ENCODE measurements at regions of chr7 and their contacts with region 1.

Region 1: DNA sequence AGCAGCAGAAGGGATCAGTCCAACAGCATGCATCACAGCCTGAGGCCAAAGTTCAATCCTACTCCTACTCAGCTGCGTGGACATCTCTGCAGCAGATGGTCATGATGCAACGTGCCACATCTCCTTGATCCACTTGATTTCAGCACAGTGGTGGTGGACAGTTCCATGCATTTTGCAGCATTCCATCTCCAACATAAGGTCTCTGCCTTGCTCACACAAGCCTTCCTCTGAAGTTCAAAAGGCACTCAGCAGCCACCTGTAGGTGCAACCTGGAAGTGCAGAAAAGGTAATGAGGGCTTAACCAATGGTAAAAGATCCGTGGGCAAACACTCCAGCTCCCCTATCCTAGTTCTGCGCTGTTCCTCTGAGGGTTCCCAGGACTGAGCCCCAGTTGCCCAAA is 57.5 kb upstream of the CHCHD3 start:
- DNase-seq: no peak
- H3K4me3 ChIP-seq: no peak overlapping the region
- H3K27ac ChIP-seq: no peak overlapping the region
- H3K4me1 ChIP-seq: no peaks in the 10 kb centered on the region
- H3K27me3 ChIP-seq: no peaks in the 10 kb centered on the region
- CTCF ChIP-seq: no peak
- POLR2A ChIP-seq: no peak

Region 2: DNA sequence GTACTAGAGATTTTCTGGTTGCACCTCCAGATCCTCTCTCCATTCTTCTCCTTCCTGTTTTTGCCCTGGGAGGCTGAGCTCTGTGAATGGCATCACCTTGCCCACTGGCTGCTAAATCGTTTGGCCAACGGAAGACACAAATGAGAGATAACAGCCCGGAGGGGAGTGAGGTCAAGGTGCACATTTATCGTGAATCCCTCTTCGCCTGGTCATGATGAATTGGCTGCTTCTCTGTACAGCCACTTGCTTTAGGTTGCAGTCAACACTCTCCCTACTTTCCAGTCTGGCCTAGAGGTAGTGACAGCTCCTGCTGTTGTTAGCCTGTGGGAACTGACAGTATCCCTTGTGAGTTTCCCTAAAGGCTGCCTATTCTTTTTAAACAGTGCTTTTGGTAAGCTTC is 27.9 kb after region 1 on chr7:
- intact Hi-C with region 1: no loop called
- DNase-seq: no peak
- H3K4me3 ChIP-seq: no peak overlapping the region
- H3K27ac ChIP-seq: no peak overlapping the region
- H3K4me1 ChIP-seq: no peaks in the 10 kb centered on the region
- H3K27me3 ChIP-seq: no peaks in the 10 kb centered on the region
- CTCF ChIP-seq: no peak
- POLR2A ChIP-seq: no peak

Region 3: GRCh38 chr7:133513598-133513997 is 374.2 kb after region 1 on chr7:
- intact Hi-C with region 1: no loop called
- DNase-seq: no peak
- H3K4me3 ChIP-seq: no peak overlapping the region
- H3K27ac ChIP-seq: no peak overlapping the region
- H3K4me1 ChIP-seq: no peaks in the 10 kb centered on the region
- H3K27me3 ChIP-seq: no peaks in the 10 kb centered on the region
- CTCF ChIP-seq: no peak
- POLR2A ChIP-seq: no peak

Region 4: GRCh38 chr7:134613623-134614347 is 1474.4 kb after region 1 on chr7:
- intact Hi-C with region 1: loop called (anchors 5 kb)
- DNase-seq: no peak
- H3K4me3 ChIP-seq: no peak overlapping the region
- H3K27ac ChIP-seq: peak overlapping the region; percentile 74
- H3K4me1 ChIP-seq: peaks cover 38% of the 10 kb centered on the region
- H3K27me3 ChIP-seq: no peaks in the 10 kb centered on the region
- CTCF ChIP-seq: no peak
- POLR2A ChIP-seq: no peak